Caco-2 (cell line): ENCODE measurements at regions of chr1 and their contacts with region 1.

Region 1: DNA sequence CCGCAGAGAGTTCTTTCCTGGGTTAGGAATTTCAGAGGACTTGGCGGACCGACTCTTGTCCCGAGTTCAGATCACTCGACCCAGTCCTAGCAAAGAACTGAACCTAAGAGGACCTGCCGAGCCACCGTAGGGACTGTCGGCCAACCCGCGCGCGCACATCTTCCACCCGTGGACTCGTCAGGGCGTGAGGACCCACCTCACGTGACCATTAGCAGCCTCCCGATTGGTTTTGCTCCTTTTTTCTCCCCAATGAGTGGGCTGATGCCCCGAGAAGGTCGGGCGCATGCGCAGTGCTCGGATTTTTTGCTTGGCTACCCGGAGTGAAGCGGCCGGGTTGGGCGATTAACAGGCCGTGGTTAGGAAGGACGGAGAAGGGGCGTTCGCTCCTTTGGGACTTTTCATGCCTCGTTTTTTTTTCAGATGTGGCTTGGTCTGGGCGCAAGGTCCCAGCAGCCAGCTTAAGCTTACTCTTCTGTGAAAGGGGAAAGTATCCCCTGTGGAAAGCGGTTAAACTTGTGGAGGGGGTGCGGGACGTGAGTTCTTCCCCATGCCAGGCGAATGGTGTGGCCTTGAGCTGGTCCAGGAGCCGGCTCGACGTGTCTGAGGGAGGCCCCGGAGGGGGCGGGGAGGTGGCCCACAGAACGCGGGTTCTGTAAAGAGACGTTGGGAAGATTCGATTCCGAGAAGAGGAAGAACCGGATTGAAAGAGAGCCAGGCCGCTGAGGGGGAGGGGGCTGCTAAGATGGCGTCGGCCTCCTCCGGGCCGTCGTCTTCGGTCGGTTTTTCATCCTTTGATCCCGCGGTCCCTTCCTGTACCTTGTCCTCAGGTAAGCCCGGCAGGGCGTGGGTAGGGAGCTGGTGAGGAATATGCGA is at the start of gene PIP5K1A:
- DNase-seq: peak; percentile 97 to 98
- H3K4me3 ChIP-seq: peak within 1 kb of the TSS; percentile 60
- H3K4me3 Mint-ChIP-seq: peak within 1 kb of the TSS; percentile 89
- H3K27ac Mint-ChIP-seq: peak within 1 kb of the TSS; percentile 92
- H3K4me1 ChIP-seq: peaks cover 4% of the 10 kb centered on the region; the same call in 1 of the 2 replicates
- H3K4me1 Mint-ChIP-seq: peaks cover 13% of the 10 kb centered on the region
- H3K27me3 ChIP-seq: no peaks in the 10 kb centered on the region
- H3K27me3 Mint-ChIP-seq: no peaks in the 10 kb centered on the region
- CTCF ChIP-seq: no peak
- total RNA-seq, gene PIP5K1A: 88.6 and 95.1 TPM in 2 replicates

Region 2: DNA sequence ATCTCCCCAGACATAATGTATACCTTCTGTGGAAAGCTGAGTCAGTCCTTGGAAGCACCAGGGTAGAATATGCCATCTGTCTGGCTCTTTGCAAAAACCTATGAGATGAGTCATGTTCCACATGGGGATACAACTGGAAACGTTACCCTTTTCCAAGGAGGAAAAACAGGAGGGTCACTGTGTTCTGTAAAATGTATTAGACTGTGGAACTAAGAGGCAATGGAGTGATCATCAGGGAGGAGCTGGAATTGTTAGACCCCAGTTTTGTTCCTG is 39.9 kb after region 1 on chr1:
- CTCF ChIA-PET with region 1: no interaction called
- POLR2A ChIA-PET with region 1: no interaction called
- intact Hi-C with region 1: no loop called
- DNase-seq: no peak
- H3K4me3 ChIP-seq: no peak overlapping the region
- H3K4me3 Mint-ChIP-seq: no peak overlapping the region
- H3K27ac Mint-ChIP-seq: no peak overlapping the region
- H3K4me1 ChIP-seq: no peaks in the 10 kb centered on the region
- H3K4me1 Mint-ChIP-seq: peaks cover 6% of the 10 kb centered on the region
- H3K27me3 ChIP-seq: no peaks in the 10 kb centered on the region
- H3K27me3 Mint-ChIP-seq: no peaks in the 10 kb centered on the region
- CTCF ChIP-seq: no peak

Region 3: GRCh38 chr1:151254217-151255213 is 56.0 kb after region 1 on chr1 and contains the start of gene PSMD4:
- CTCF ChIA-PET with region 1: interaction called, 6 read pairs
- POLR2A ChIA-PET with region 1: interaction called, 12 read pairs
- intact Hi-C with region 1: loop called (anchors 1 kb)
- DNase-seq: peak; percentile 96 to 97
- H3K4me3 ChIP-seq: peak within 1 kb of the TSS; percentile 76
- H3K4me3 Mint-ChIP-seq: peak within 1 kb of the TSS; percentile 91
- H3K27ac Mint-ChIP-seq: peak within 1 kb of the TSS; percentile 98
- H3K4me1 ChIP-seq: peaks cover 4% of the 10 kb centered on the region; the same call in 1 of the 2 replicates
- H3K4me1 Mint-ChIP-seq: peaks cover 10% of the 10 kb centered on the region
- H3K27me3 ChIP-seq: no peaks in the 10 kb centered on the region
- H3K27me3 Mint-ChIP-seq: peaks cover 3% of the 10 kb centered on the region
- CTCF ChIP-seq: no peak
- total RNA-seq, gene PSMD4: 250 and 253 TPM in 2 replicates

Region 4: GRCh38 chr1:151611832-151612500 is 413.5 kb after region 1 on chr1 and contains the start of gene SNX27:
- CTCF ChIA-PET with region 1: no interaction called
- POLR2A ChIA-PET with region 1: no interaction called
- intact Hi-C with region 1: loop called (anchors 5 kb)
- DNase-seq: peak; percentile 92 to 95
- H3K4me3 ChIP-seq: peak within 1 kb of the TSS; percentile 98
- H3K4me3 Mint-ChIP-seq: peak within 1 kb of the TSS; percentile 98
- H3K27ac Mint-ChIP-seq: peak within 1 kb of the TSS; percentile 96
- H3K4me1 ChIP-seq: peaks cover 25% of the 10 kb centered on the region
- H3K4me1 Mint-ChIP-seq: peaks cover 45% of the 10 kb centered on the region
- H3K27me3 ChIP-seq: no peaks in the 10 kb centered on the region
- H3K27me3 Mint-ChIP-seq: no peaks in the 10 kb centered on the region
- CTCF ChIP-seq: no peak
- total RNA-seq, gene SNX27: 47.2 and 47.4 TPM in 2 replicates

Region 5: GRCh38 chr1:151993654-151994496 is 795.4 kb after region 1 on chr1 and contains the start of gene S100A10:
- CTCF ChIA-PET with region 1: no interaction called
- POLR2A ChIA-PET with region 1: no interaction called
- intact Hi-C with region 1: loop called (anchors 5 kb)
- DNase-seq: peak; percentile 90 to 91
- H3K4me3 ChIP-seq: peak within 1 kb of the TSS; percentile 88
- H3K4me3 Mint-ChIP-seq: peak within 1 kb of the TSS; percentile 88
- H3K27ac Mint-ChIP-seq: peak within 1 kb of the TSS; percentile 99
- H3K4me1 ChIP-seq: peaks cover 55% of the 10 kb centered on the region
- H3K4me1 Mint-ChIP-seq: peaks cover 34% of the 10 kb centered on the region
- H3K27me3 ChIP-seq: no peaks in the 10 kb centered on the region
- H3K27me3 Mint-ChIP-seq: no peaks in the 10 kb centered on the region
- CTCF ChIP-seq: no peak
- total RNA-seq, gene S100A10: 2,143 and 2,154 TPM in 2 replicates